K562 (cell line): ENCODE measurements at regions of chr14 and their contacts with region 1.

Region 1: DNA sequence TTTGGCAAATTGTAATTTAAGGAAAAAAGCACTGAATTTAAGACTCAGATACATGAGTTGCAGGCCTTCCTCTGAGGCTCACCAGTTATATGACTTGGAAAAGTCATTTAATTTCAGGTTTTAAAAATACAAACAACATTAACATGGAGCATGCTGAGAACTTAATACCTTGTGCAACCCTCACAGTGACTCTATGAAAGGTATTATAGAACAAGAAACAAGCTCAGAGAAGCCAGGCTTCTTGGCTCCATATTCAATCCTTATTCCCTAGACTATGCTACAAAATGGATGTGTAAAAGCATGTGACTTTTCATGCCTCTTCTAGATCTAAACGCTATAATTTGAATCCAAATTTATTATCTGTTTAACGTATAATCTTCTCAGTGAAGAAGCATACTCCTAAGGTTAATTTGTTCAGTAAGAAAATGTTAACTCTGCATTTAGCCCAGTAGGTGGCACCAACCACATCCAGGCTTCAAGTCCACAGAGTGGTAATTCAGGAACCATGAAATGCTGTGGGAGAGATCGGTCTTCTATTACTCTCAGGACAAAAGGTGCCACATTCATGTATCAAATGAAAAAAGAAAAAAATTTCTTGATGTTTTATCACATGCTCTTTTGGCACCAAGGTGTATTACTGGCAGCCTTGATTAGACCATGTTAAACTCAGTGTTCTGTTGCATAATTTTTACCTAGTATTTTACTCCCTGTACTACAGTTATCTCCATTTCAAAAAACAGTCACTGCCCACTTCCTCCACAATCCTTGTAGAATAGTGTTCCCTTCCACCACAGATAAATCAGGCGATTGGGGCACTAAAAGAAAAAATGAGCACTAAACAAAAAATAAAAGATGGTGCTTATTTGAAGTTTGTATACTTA is 9.3 kb downstream of the CCDC196 start:
- DNase-seq: peak; percentile 20 to 73 (median 34)
- ATAC-seq: peak; percentile 96
- H3K4me3 ChIP-seq: no peak overlapping the region
- H3K27ac ChIP-seq: no peak overlapping the region
- H3K4me1 ChIP-seq: no peaks in the 10 kb centered on the region
- H3K27me3 ChIP-seq: no peaks in the 10 kb centered on the region
- CTCF ChIP-seq: peak; percentile 57 to 68 (median 58); a peak in 5 of 6 replicates
- EP300 ChIP-seq: no peak
- POLR2A ChIP-seq: no peak
- RAD21 ChIP-seq: peak; percentile 42 to 66

Region 2: DNA sequence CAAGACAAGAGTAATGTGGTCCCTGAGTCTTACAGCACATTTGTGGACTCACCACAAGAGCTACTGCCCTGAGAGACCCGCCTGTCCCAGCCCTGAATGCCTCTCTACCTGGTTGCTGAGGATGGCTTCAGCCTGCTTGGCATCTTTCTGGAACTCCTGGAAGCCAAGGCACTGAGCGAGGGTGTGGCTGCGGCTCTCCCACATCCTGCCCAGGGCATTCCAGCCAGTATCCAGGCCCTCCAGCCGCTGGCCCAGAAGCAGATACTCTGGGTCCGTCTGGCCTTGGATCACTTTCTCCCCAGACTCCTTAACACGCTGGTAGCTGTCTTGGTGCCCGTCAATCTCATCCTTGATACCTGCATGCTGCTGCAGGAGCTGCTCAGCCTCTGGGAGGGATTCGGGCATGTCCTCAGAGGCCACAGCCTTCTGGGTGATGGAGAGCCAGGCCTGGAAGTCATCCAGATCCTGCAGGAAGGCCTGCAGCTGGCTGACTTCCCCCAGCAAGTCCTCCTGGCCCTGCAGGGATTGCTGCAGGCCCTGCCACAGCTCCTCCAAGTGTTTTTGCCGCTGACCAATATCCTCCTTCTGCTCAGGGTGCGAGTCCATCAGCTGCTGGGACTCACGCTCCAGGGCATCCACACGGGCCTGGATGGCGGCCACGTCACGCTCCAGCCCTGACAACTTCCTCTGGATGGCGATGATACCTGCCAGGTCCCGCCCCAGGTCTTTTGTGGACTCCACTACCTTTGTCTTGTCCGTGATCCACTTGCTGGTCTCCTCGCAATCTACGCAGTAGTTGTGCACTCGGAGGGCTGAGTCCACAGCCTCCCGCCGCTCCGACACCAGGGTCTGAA is 1708.9 kb before region 1 on chr14:
- CTCF ChIA-PET with region 1: no interaction called
- POLR2A ChIA-PET with region 1: no interaction called
- in situ Hi-C with region 1: no loop called
- intact Hi-C with region 1: no loop called
- DNase-seq: no peak
- ATAC-seq: no peak
- H3K4me3 ChIP-seq: no peak overlapping the region
- H3K27ac ChIP-seq: no peak overlapping the region
- H3K4me1 ChIP-seq: no peaks in the 10 kb centered on the region
- H3K27me3 ChIP-seq: no peaks in the 10 kb centered on the region
- CTCF ChIP-seq: no peak
- EP300 ChIP-seq: no peak
- POLR2A ChIP-seq: no peak
- RAD21 ChIP-seq: no peak

Region 3: GRCh38 chr14:66746316-66747006 is 251.0 kb after region 1 on chr14:
- CTCF ChIA-PET with region 1: no interaction called
- POLR2A ChIA-PET with region 1: no interaction called
- in situ Hi-C with region 1: no loop called
- intact Hi-C with region 1: loop called (anchors 1 kb)
- DNase-seq: peak in 3 of 4 experiments; percentile 8 to 31 (median 9)
- ATAC-seq: 0 out of 3 replicates have a peak, but pooled peaks have one; percentile 47
- H3K4me3 ChIP-seq: no peak overlapping the region
- H3K27ac ChIP-seq: no peak overlapping the region
- H3K4me1 ChIP-seq: no peaks in the 10 kb centered on the region
- H3K27me3 ChIP-seq: no peaks in the 10 kb centered on the region
- CTCF ChIP-seq: peak; percentile 31 to 41 (median 35); a peak in 4 of 6 replicates
- EP300 ChIP-seq: no peak
- POLR2A ChIP-seq: no peak
- RAD21 ChIP-seq: peak in 1 of 2 experiments; percentile 35; a peak in 2 of 4 replicates

Region 4: DNA sequence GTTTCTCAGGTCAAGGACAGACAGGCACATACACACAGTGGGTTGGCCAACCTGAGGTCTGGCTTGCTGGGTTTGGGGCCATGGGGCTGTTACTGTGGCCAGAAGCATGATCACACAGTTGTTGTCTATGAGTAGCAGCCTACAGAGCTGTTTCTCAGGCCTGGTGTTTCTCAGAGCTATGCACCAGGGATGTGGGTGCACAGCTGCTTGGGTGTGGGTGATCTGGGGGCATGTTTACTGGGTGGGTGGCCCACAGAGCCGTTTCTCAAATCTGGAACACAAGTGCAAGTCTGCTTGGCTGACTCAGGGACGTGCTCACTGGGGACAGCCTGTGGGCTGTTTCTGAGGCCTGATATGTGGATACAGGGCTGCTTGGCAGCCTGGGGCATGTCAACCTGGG is 722.7 kb after region 1 on chr14:
- CTCF ChIA-PET with region 1: no interaction called
- POLR2A ChIA-PET with region 1: no interaction called
- in situ Hi-C with region 1: no loop called
- intact Hi-C with region 1: no loop called
- DNase-seq: no peak
- ATAC-seq: no peak
- H3K4me3 ChIP-seq: no peak overlapping the region
- H3K27ac ChIP-seq: no peak overlapping the region
- H3K4me1 ChIP-seq: no peaks in the 10 kb centered on the region
- H3K27me3 ChIP-seq: no peaks in the 10 kb centered on the region
- CTCF ChIP-seq: no peak
- EP300 ChIP-seq: no peak
- POLR2A ChIP-seq: no peak
- RAD21 ChIP-seq: no peak

Region 5: DNA sequence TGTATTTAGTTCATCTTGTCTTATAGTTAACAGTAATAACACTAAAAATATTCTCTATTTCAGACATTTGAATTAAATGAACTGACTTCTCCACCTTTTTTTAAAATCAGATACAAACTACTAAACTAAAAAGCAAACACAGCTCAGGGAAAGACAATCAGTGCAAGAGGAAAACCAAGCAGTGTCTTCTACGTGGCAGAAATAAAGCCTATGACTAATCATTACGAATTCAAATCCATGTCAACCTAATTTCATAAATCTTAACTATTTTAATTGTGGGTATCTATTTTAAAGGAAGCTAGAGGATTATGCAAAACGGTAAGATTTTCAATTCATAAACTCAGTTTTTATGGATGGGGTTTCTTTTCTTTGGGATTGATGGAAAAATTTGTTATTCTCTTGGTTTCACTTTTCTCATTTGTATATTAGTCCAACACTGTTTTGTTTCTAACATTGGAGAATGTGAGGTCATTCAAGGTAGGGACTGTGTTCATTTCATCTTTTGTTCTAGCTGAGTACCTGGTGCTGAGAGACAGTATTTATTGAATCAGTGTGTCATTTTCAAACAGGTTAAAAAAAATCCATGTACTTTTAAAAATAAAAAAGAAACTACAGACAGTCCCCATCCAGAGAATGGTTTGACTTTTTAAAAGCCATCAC is 733.0 kb after region 1 on chr14:
- CTCF ChIA-PET with region 1: no interaction called
- POLR2A ChIA-PET with region 1: no interaction called
- in situ Hi-C with region 1: no loop called
- intact Hi-C with region 1: no loop called
- DNase-seq: no peak
- ATAC-seq: no peak
- H3K4me3 ChIP-seq: no peak overlapping the region
- H3K27ac ChIP-seq: no peak overlapping the region
- H3K4me1 ChIP-seq: no peaks in the 10 kb centered on the region
- H3K27me3 ChIP-seq: no peaks in the 10 kb centered on the region
- CTCF ChIP-seq: no peak
- EP300 ChIP-seq: no peak
- POLR2A ChIP-seq: no peak
- RAD21 ChIP-seq: no peak

Region 6: DNA sequence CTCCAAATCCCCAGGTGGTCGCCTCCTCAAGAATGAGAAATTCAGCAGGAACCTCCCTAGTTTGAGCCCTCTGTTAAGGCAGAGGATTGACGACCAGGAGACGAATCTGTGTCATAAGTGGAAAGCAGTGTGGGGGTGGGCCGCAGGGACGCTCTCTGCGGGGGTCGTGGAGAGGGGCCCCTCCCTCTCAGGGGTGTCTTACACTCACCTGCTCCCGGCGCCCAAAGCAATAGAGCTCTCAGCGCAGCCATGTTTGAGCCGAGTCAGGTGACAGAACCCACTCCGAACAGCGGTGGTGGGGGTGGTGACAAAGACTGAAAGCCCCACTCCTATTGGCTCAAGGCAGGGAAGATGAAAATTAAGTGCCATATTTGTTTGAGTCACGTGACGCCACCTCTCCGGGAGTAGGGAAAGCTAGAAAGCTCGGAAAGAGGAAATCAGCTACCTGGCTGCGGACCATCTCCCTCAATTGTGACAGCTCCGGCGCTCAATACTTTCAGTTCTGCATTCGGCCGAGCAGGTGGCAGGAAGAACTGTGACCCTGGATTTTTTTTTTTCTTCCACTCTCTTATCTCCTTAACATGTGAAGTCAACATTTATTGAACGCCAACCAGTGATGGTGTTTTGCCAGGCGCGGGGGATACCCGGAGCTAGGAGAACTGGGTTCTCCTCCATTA is 1321.0 kb after region 1 on chr14 and contains the start of gene ZFYVE26:
- CTCF ChIA-PET with region 1: no interaction called
- POLR2A ChIA-PET with region 1: no interaction called
- in situ Hi-C with region 1: loop called (anchors 25 kb)
- intact Hi-C with region 1: no loop called
- DNase-seq: peak; percentile 87 to 93 (median 89)
- ATAC-seq: peak; percentile 97
- H3K4me3 ChIP-seq: peak within 1 kb of the TSS; percentile 74
- H3K27ac ChIP-seq: peak within 1 kb of the TSS; percentile 73
- H3K4me1 ChIP-seq: peaks cover 0 to 6% of the 10 kb centered on the region in 2 experiments; a peak in 3 of 5 replicates
- H3K27me3 ChIP-seq: no peaks in the 10 kb centered on the region
- CTCF ChIP-seq: no peak
- EP300 ChIP-seq: no peak
- POLR2A ChIP-seq: peak; percentile 77
- RAD21 ChIP-seq: no peak
- polyA plus RNA-seq, gene ZFYVE26: 0.32 to 0.48 TPM